Right ventricle myocardium inferior (tissue), 1 donor: ENCODE measurements at regions of chr17 and their contacts with region 1.

Region 1: GRCh38 chr17:27473748-27474609 is 17.7 kb downstream of the KSR1 start:
- DNase-seq: no peak
- ATAC-seq: peak; percentile 43

Region 2: DNA sequence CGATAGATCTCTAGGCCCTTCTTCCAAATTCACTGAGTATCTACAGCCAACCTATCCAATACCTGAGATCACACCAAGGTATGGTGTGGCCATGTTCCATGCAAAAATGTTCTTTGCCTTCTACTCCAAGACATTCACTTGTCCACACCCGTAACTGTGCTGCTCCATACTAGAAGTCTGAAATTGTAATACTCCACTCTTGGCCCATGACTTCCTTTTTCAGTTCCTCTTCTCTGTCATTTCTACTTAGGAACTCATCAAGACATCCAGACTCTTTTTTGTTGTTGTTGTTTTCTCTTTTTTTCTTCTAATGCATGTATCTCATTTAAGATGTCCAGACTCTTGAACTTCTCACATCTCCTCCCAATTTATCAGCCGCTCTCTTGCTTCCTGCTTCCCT is 60.2 kb before region 1 on chr17:
- intact Hi-C with region 1: no loop called
- DNase-seq: no peak
- ATAC-seq: no peak

Region 3: GRCh38 chr17:27559506-27560481 is 85.8 kb after region 1 on chr17:
- intact Hi-C with region 1: loop called (anchors 5 kb)
- DNase-seq: peak; percentile 87
- ATAC-seq: peak; percentile 93